Mammary epithelial cell (primary cell): ENCODE measurements at regions of chr6 and their contacts with region 1.

Region 1: DNA sequence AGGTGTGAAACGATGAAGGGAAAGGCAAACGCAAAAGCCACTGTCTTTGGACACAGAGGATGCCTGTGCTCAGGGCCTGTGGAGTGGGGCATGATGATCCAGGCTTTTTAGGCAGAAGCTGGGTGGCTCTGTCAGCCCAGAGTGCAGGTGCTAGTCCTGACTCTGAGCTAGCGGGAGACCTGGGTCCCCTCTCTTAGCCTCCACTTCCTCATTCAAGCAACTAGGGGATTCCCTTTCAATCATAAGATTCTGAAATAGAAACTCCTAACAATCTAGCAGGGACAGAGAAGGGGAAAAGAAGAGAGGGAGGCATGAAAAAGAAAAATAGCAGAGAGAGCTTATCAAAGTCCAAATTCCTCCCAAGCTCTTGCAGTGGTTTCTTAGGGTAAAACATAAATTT is 7.6 kb upstream of the HIVEP2 start:
- DNase-seq: no peak
- H3K4me3 ChIP-seq: no peak overlapping the region
- H3K27ac ChIP-seq: no peak overlapping the region
- H3K4me1 ChIP-seq: peaks cover 4% of the 10 kb centered on the region
- H3K27me3 ChIP-seq: no peaks in the 10 kb centered on the region
- CTCF ChIP-seq: no peak

Region 2: GRCh38 chr6:142737368-142738034 is 215.1 kb before region 1 on chr6:
- CTCF ChIA-PET with region 1: no interaction called
- dilution Hi-C with region 1: no loop called
- in situ Hi-C with region 1: no loop called
- intact Hi-C with region 1: no loop called
- DNase-seq: no peak
- H3K4me3 ChIP-seq: no peak overlapping the region
- H3K27ac ChIP-seq: no peak overlapping the region
- H3K4me1 ChIP-seq: no peaks in the 10 kb centered on the region
- H3K27me3 ChIP-seq: no peaks in the 10 kb centered on the region
- CTCF ChIP-seq: no peak

Region 3: GRCh38 chr6:143034689-143035334 is 82.2 kb after region 1 on chr6:
- CTCF ChIA-PET with region 1: no interaction called
- dilution Hi-C with region 1: loop called (anchors 5 kb)
- in situ Hi-C with region 1: no loop called
- intact Hi-C with region 1: no loop called
- DNase-seq: no peak
- H3K4me3 ChIP-seq: no peak overlapping the region
- H3K27ac ChIP-seq: no peak overlapping the region
- H3K4me1 ChIP-seq: no peaks in the 10 kb centered on the region
- H3K27me3 ChIP-seq: no peaks in the 10 kb centered on the region
- CTCF ChIP-seq: no peak

Region 4: DNA sequence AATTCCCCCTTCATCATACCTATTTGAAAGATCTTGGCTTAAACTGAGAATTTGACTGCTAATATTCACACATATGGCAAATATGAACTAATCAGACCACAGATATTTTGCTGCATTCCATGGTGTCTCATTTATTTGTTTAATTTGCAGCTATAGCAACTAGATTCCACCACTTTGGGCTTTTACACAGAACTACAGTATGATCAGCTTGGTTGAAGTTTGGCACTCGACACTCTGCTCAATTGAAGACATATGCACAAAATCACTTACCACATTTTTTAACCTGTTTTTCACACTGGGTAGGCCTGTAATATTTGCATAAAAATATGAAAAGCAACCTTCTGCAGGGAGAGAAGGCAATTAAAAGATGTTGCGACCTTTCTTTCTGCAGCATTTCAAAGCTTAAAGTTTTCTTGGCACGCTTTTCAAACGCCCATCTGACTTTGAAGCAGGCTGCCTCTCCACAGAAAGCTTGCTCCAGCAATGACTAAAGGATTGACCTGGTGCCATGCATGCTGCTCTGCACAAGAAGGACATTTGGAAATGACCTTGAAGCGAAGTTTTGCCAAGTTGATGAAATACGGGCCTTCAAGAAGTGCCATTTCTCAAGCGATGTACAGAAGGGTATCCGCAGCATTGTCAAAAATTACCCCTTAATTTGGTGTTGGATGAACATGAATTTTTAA is 234.8 kb after region 1 on chr6:
- CTCF ChIA-PET with region 1: interaction called, 14 read pairs
- dilution Hi-C with region 1: no loop called
- in situ Hi-C with region 1: no loop called
- intact Hi-C with region 1: loop called (anchors 10 kb)
- DNase-seq: peak; percentile 20
- H3K4me3 ChIP-seq: no peak overlapping the region
- H3K27ac ChIP-seq: no peak overlapping the region
- H3K4me1 ChIP-seq: peaks cover 12% of the 10 kb centered on the region
- H3K27me3 ChIP-seq: no peaks in the 10 kb centered on the region
- CTCF ChIP-seq: no peak